Dorsolateral prefrontal cortex (tissue), 120 donors: ENCODE measurements at regions of chr1 and their contacts with region 1.

Region 1: GRCh38 chr1:90721210-90722194 is 4.4 kb upstream of the BARHL2 start:
- DNase-seq: peak in 1 of 10 donors; percentile 79
- H3K4me3 ChIP-seq: no peak overlapping the region
- H3K27ac ChIP-seq: peak overlapping the region in 1 of 59 donors; percentile 51
- H3K27me3 ChIP-seq: peaks cover 56 to 100% (median 96%) of the 10 kb centered on the region in 45 donors
- CTCF ChIP-seq: peak; percentile 45 to 79 (median 68)

Region 2: GRCh38 chr1:90834886-90835660 is 113.6 kb after region 1 on chr1:
- intact Hi-C with region 1: loop called in 1 of 2 experiments (anchors 10 kb)
- DNase-seq: no peak
- H3K4me3 ChIP-seq: peak overlapping the region in 53 of 59 donors; percentile 12 to 64 (median 45)
- H3K27ac ChIP-seq: no peak overlapping the region
- H3K27me3 ChIP-seq: peaks cover 0 to 94% (median 71%) of the 10 kb centered on the region in 45 donors
- CTCF ChIP-seq: no peak

Region 3: DNA sequence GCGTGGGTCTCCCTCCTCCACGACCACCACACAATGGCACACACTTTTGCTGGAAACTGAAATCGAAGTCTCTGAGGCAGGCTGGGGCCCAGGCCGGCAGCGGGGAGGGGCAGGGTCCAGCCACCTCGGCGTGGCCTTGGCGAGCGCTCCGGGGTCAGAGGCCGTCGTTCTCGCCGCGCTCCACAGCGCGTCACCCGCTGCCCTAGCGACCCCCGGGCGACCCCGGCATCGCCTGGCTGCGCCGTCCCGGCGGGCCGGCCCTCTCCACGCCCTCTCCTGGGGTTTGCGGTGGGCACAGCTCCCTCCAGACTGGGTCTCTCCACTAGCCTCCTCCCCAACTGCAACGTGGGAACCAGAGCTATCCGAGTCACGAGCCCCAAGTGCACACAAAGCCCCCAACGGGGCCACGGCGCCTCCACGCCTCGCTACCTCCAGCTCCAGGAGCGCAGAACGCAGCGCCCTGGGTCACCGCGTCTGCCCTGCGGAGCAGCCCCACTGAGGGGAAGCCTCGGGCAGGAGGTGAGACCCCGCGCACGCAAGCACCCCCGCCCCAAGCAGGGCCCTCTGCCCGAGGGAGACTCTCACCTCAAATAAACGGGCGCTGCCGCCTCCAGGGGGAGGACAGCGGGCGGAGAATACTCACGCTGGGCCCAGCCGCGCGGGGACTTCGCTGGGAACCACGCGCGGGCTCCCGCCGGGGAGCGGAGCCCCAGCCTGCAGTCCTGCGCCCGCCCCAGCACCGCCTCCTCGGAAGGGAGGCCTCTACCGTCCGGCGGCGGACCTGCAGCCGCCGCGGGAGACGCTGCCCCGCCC is 129.6 kb after region 1 on chr1:
- intact Hi-C with region 1: loop called in 1 of 2 experiments (anchors 5 kb)
- DNase-seq: peak in 8 of 10 donors; percentile 56 to 82 (median 72)
- H3K4me3 ChIP-seq: peak overlapping the region; percentile 48 to 92 (median 79)
- H3K27ac ChIP-seq: peak overlapping the region in 26 of 59 donors; percentile 0 to 86 (median 42)
- H3K27me3 ChIP-seq: peaks cover 0 to 6% (median 0%) of the 10 kb centered on the region in 45 donors
- CTCF ChIP-seq: peak; percentile 35 to 87 (median 76)

Region 4: GRCh38 chr1:90964444-90965035 is 243.0 kb after region 1 on chr1:
- intact Hi-C with region 1: loop called (anchors 5 to 10 kb)
- DNase-seq: no peak
- H3K4me3 ChIP-seq: no peak overlapping the region
- H3K27ac ChIP-seq: peak overlapping the region in 10 of 59 donors; percentile 2 to 59 (median 17)
- H3K27me3 ChIP-seq: no peaks in the 10 kb centered on the region
- CTCF ChIP-seq: peak in 55 of 56 donors; percentile 34 to 85 (median 63)

Region 5: DNA sequence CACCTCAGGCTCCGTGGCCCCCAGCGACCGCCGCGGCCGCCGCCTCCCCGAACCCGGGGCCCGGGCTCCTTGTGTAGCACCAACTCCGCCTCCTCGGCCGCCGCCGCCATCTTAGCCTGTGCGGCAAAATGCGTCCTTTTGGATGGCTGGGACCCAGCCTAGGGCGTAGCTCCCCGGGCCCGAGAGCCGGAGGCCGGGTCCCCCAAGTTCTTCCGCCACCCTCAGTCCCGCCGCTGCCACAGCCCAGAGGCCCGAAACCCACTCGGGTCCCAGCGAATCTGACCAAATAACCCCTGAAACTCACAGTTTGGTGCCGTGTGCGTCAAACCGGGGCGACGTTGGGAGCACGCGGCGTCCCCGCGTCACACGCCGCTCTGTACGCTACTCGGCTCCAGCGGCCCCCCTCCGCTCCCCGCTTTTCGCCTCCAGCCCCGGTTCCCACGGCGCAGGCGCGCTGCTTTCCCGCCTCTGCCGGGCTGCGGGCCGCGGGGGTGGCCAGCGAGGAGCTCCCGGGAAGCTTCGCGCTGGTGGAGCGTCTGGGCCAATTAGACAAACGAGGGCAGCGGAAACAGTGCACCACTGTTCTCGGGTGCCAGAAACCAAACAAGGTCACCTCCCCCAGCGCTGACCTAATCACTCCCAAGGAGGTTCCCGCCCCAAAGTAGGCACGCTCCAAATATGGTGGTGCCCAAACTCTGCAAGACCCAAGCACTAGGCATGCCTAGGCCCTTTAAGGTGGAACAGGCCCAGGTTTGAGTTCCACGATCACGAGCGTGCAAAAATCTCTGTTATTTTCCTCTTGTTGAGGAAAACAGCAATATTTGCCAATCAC is 300.4 kb after region 1 on chr1 and contains the start of gene ZNF644:
- intact Hi-C with region 1: loop called in 1 of 2 experiments (anchors 10 kb)
- DNase-seq: peak; percentile 86 to 97 (median 92)
- H3K4me3 ChIP-seq: peak within 1 kb of the TSS; percentile 70 to 96 (median 85)
- H3K27ac ChIP-seq: peak within 1 kb of the TSS; percentile 68 to 100 (median 99)
- H3K27me3 ChIP-seq: no peaks in the 10 kb centered on the region
- CTCF ChIP-seq: peak in 25 of 56 donors; percentile 3 to 49 (median 23)
- total RNA-seq, gene ZNF644: 55.9 to 109 (median 75.5) TPM

Region 6: GRCh38 chr1:91165033-91165654 is 443.6 kb after region 1 on chr1:
- intact Hi-C with region 1: loop called (anchors 5 kb)
- DNase-seq: peak; percentile 70 to 87 (median 84)
- H3K4me3 ChIP-seq: no peak overlapping the region
- H3K27ac ChIP-seq: no peak overlapping the region
- H3K27me3 ChIP-seq: peaks cover 0 to 2% (median 0%) of the 10 kb centered on the region in 45 donors
- CTCF ChIP-seq: peak; percentile 77 to 99 (median 95)